ENCODE measurements at regions of chr19 and their contacts with region 1.

Region 1: GRCh38 chr19:13150187-13150930 is at the starts of genes IER2 and STX10:
- DNase-seq: peak; percentile 87 to 91
- H3K4me3 ChIP-seq: peak within 1 kb of the TSS; percentile 83
- H3K27ac ChIP-seq: peak within 1 kb of the TSS; percentile 96
- H3K4me1 ChIP-seq: peaks cover 28% of the 10 kb centered on the region
- H3K27me3 ChIP-seq: no peaks in the 10 kb centered on the region
- CTCF ChIP-seq: peak; percentile 66
- total RNA-seq, gene IER2: 72.7 and 95.5 TPM in 2 replicates
- total RNA-seq, gene STX10: 86.2 and 89.6 TPM in 2 replicates

Region 2: DNA sequence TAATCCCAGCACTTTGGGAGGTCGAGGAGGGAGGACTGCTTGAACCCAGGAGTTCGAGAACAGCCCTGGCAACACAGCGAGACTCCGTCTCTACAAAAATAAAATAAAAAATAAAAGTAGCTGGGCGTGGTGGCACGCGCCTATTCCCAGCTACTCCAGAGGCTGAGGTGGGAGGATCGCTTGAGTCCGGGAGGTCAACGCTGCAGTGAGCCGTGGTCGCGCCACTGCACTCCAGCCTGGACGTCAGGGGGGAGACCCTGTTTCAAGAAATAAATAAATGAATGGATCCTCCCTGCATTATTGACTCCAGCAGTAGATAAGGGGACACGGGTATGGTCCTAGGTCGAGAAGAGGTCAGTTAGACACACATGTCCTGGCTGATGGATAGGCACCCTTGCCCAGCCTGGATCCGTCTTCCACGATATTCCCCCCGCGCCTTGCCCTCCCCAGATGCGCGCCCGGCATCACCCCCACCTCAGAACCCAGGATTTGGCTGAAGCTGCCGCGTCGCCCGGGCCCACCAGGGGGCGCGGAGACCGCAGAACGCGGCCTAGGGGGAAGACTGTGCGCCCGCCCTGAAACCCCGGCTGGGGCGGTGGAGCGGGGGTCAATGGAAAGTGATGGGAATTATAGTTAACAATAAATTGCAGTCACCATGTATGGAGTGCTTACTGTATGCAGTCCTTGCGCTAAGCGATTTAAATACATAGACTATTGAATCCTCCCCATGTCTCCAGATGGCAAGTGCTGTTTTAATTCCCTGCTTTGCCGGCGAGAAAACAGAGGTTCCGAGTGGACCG is 372.9 kb before region 1 on chr19:
- CTCF ChIA-PET with region 1: no interaction called
- POLR2A ChIA-PET with region 1: no interaction called
- intact Hi-C with region 1: loop called (anchors 5 kb)
- DNase-seq: peak; percentile 63 to 85
- H3K4me3 ChIP-seq: peak overlapping the region; percentile 59
- H3K27ac ChIP-seq: peak overlapping the region; percentile 51
- H3K4me1 ChIP-seq: peaks cover 54% of the 10 kb centered on the region
- H3K27me3 ChIP-seq: no peaks in the 10 kb centered on the region
- CTCF ChIP-seq: peak; percentile 99

Region 3: DNA sequence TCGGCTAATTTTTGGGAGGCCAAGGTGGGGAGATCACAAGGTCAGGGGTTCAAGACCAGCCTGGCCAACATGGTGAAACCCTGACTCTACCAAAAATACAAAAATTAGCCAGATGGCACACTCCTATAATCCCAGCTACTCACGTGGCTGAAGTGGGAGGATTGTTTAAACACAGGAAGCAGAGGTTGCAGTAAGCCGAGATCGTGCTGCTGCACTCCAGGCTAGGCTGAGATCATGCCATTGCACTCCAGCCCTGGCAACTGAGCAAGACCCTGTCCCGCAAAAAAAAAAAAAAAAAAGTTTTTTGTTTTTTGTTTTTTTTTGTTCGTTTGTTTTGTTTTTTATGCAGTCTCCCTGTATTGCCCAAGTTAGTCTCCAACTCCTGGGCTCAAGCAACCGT is 290.8 kb before region 1 on chr19:
- CTCF ChIA-PET with region 1: no interaction called
- POLR2A ChIA-PET with region 1: no interaction called
- intact Hi-C with region 1: no loop called
- DNase-seq: no peak
- H3K4me3 ChIP-seq: no peak overlapping the region
- H3K27ac ChIP-seq: no peak overlapping the region
- H3K4me1 ChIP-seq: no peaks in the 10 kb centered on the region
- H3K27me3 ChIP-seq: no peaks in the 10 kb centered on the region
- CTCF ChIP-seq: no peak

Region 4: DNA sequence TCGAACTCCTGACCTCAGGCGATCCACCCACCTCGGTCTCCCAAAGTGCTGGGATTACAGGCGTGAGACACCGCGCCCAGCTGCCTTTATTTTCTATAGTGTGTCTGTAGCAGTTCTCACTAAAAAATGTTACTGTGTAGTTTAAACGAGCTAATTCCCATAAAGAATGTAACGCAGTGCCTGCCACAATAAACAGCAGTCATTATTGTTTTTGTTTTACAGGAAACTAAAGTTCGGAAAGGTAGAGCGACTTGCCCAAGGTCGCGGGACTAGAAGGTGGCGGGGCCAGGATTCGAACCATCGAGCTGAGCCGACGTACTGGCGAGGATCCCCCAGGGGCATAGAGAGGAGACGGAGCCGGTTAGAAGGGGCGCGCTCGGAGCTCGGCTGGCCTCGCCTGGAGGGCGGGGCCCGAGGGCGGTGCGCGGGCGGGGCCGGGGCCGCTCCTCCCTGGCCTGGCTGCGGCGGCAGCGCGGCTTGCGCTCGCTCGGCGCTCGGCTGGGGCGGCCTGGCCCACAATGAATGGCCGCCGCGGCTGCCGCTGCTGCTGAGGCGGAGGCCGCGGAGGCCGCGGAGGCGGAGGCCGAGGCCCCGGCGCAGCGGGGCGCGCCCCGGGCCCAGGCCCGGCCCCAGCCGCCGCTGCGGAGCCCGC is 32.5 kb before region 1 on chr19 and contains the start of gene NACC1:
- CTCF ChIA-PET with region 1: no interaction called
- POLR2A ChIA-PET with region 1: interaction called, 12 read pairs
- intact Hi-C with region 1: loop called (anchors 1 kb)
- DNase-seq: peak; percentile 72 to 92
- H3K4me3 ChIP-seq: peak within 1 kb of the TSS; percentile 99
- H3K27ac ChIP-seq: peak within 1 kb of the TSS; percentile 77
- H3K4me1 ChIP-seq: peaks cover 29% of the 10 kb centered on the region
- H3K27me3 ChIP-seq: no peaks in the 10 kb centered on the region
- CTCF ChIP-seq: no peak
- total RNA-seq, gene NACC1: 101 and 133 TPM in 2 replicates

Region 5: GRCh38 chr19:13195678-13196077 is 45.3 kb after region 1 on chr19:
- CTCF ChIA-PET with region 1: no interaction called
- POLR2A ChIA-PET with region 1: interaction called, 14 read pairs
- intact Hi-C with region 1: loop called (anchors 2 kb)
- DNase-seq: peak; percentile 29 to 41
- H3K4me3 ChIP-seq: no peak overlapping the region
- H3K27ac ChIP-seq: no peak overlapping the region
- H3K4me1 ChIP-seq: peaks cover 8% of the 10 kb centered on the region
- H3K27me3 ChIP-seq: no peaks in the 10 kb centered on the region
- CTCF ChIP-seq: peak; percentile 50

Region 6: GRCh38 chr19:13262450-13262849 is 112.1 kb after region 1 on chr19:
- CTCF ChIA-PET with region 1: no interaction called
- POLR2A ChIA-PET with region 1: no interaction called
- intact Hi-C with region 1: loop called (anchors 1 kb)
- DNase-seq: peak in 1 of 2 experiments; percentile 47
- H3K4me3 ChIP-seq: no peak overlapping the region
- H3K27ac ChIP-seq: no peak overlapping the region
- H3K4me1 ChIP-seq: peaks cover 19% of the 10 kb centered on the region
- H3K27me3 ChIP-seq: no peaks in the 10 kb centered on the region
- CTCF ChIP-seq: peak; percentile 79